PC-9 (cell line): ENCODE measurements at regions of chr5 and their contacts with region 1.

Region 1: GRCh38 chr5:91345461-91345860 is 37.7 kb downstream of the ARRDC3 start:
- DNase-seq: no peak
- H3K4me3 ChIP-seq: no peak overlapping the region
- H3K27ac ChIP-seq: no peak overlapping the region
- H3K4me1 ChIP-seq: no peaks in the 10 kb centered on the region
- H3K27me3 ChIP-seq: no peaks in the 10 kb centered on the region
- CTCF ChIP-seq: no peak

Region 2: DNA sequence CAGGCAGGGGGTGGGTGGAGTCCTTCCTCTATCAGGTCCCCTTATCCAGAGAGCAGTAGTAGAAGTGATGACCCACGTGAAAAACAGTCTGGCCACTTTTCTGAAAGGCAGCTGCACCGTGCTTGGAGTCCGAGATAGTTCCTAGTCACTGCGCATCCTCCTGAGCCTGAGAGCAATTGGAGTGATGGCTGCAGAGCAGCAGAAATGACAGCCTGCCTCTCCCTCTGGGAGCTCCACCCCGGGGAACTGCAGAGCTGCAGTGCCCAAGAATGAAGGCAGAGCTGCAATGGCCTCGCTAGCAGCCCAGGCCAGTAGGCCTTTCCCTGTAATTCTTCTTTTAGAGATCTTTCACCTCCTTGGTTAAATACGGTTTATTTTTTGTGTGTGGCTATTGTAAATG is 1018.5 kb before region 1 on chr5:
- CTCF ChIA-PET with region 1: no interaction called
- POLR2A ChIA-PET with region 1: no interaction called
- intact Hi-C with region 1: no loop called
- DNase-seq: no peak
- H3K4me3 ChIP-seq: no peak overlapping the region
- H3K27ac ChIP-seq: no peak overlapping the region
- H3K4me1 ChIP-seq: no peaks in the 10 kb centered on the region
- H3K27me3 ChIP-seq: no peaks in the 10 kb centered on the region
- CTCF ChIP-seq: no peak

Region 3: DNA sequence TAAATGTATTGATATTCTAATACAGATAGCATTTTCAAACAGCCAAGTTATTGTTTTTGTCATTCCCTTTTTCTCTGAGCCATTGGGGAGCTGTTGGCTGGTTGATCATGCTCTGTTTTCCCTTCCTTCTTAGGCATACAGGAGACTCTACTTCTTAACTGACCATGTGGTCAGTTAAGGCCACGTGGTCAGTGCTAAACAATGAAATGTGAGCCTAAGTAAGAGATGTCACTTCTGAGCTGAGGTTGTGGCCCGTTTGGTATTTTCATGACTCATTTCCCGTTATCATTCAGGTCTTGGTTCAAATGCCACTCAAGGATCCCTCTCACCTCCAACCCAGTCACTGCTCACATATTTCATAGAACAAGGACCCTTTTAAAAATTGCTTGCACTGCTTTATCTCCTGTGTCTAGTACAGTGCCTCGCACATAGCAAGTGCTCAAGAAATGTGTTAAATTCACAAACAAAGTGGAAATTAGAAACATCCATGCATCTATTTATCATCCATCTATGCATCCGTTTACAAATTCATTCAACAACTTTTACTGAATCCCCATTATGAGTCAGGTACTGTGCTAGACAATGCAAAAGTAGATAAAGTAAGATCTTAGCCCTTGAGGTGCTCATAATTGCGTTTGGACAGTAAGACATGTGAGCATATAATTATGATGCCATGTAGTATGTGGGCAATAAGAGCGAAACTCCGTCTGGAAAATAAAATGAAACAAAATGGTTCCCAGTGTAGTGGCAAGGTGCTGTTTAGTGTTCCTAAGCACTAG is 13.0 kb before region 1 on chr5:
- CTCF ChIA-PET with region 1: no interaction called
- POLR2A ChIA-PET with region 1: no interaction called
- intact Hi-C with region 1: loop called (anchors 2 kb)
- DNase-seq: peak; percentile 55 to 93
- H3K4me3 ChIP-seq: no peak overlapping the region
- H3K27ac ChIP-seq: peak overlapping the region; percentile 59
- H3K4me1 ChIP-seq: peaks cover 27% of the 10 kb centered on the region
- H3K27me3 ChIP-seq: no peaks in the 10 kb centered on the region
- CTCF ChIP-seq: no peak